ENCODE measurements at regions of chr10 and their contacts with region 1.

Region 1: GRCh38 chr10:52740913-52741675 is 31.5 kb downstream of the MBL2 start:
- DNase-seq: no peak
- ATAC-seq: no peak
- H3K4me3 ChIP-seq: no peak overlapping the region
- H3K27ac ChIP-seq: no peak overlapping the region
- H3K4me1 ChIP-seq: no peaks in the 10 kb centered on the region
- H3K27me3 ChIP-seq: no peaks in the 10 kb centered on the region

Region 2: GRCh38 chr10:52688899-52689298 is 52.2 kb before region 1 on chr10:
- intact Hi-C with region 1: no loop called
- DNase-seq: no peak
- ATAC-seq: no peak
- H3K4me3 ChIP-seq: no peak overlapping the region
- H3K27ac ChIP-seq: no peak overlapping the region
- H3K4me1 ChIP-seq: no peaks in the 10 kb centered on the region
- H3K27me3 ChIP-seq: no peaks in the 10 kb centered on the region

Region 3: GRCh38 chr10:52779541-52780390 is 38.7 kb after region 1 on chr10:
- intact Hi-C with region 1: loop called in 1 of 2 experiments (anchors 5 kb)
- DNase-seq: peak in 1 of 2 donors; percentile 78
- ATAC-seq: no peak
- H3K4me3 ChIP-seq: no peak overlapping the region
- H3K27ac ChIP-seq: no peak overlapping the region
- H3K4me1 ChIP-seq: no peaks in the 10 kb centered on the region
- H3K27me3 ChIP-seq: no peaks in the 10 kb centered on the region

Measured in aorta (tissue), 5 donors.